ENCODE measurements at regions of chr1 and their contacts with region 1.

Region 1: GRCh38 chr1:238141353-238141752 is 250.6 kb upstream of the ZP4 start:
- DNase-seq: no peak

Region 2: GRCh38 chr1:238329671-238330070 is 188.3 kb after region 1 on chr1:
- intact Hi-C with region 1: loop called in 1 of 2 experiments (anchors 5 kb)
- DNase-seq: no peak

Measured in posterior vena cava (tissue), 2 donors.